Heart right ventricle (tissue), 16 donors: ENCODE measurements at regions of chr7 and their contacts with region 1.

Region 1: DNA sequence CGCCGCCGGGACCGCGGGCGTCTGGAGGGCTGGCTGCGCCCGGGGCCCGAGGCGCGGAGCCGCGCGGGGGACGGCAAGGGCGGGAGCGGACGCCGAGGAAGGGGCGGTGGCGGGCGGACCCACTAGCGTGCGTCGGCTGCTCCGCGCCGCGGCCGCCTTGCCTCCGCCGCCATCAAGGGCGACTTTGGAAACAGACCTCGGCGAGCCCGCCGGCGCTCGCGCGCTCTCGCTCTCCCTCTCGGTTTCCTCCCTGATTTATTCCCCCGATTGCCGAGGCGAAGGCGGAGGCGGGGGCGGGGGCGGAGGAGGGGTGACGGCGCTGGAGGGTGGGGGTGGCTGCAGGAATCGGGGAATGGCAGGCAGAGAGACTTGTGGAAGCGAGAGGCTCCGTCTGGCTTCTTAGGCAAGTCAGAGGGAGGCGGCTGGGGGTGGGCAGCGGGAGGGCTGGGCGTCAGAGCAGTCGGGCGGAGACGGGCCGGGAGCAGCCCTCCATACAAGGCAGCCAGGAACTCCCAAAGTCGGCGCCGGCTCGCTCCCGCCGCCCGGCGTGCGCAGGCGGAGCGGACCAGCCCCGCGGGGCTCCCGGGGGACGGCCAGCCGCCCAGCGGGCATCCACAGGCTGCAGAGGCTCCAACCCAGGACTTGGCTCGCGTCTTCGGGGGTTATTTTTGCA is at the start of gene CACNA2D1:
- DNase-seq: peak; percentile 88 to 89
- ATAC-seq: peak; percentile 94 to 99 (median 96)
- H3K4me3 ChIP-seq: peak within 1 kb of the TSS; percentile 36 to 77 (median 70)
- H3K27ac ChIP-seq: peak within 1 kb of the TSS; percentile 86 to 97 (median 92)
- H3K4me1 ChIP-seq: peaks cover 0 to 38% (median 20%) of the 10 kb centered on the region in 9 donors
- H3K27me3 ChIP-seq: peaks cover 0 to 51% (median 3%) of the 10 kb centered on the region in 7 donors
- CTCF ChIP-seq: peak in 5 of 9 donors; percentile 25 to 64 (median 61)
- total RNA-seq, gene CACNA2D1: 34.0 to 131 (median 81.6) TPM

Region 2: GRCh38 chr7:82172017-82172416 is 271.7 kb before region 1 on chr7:
- intact Hi-C with region 1: loop called in 1 of 10 experiments (anchors 10 kb)
- DNase-seq: no peak
- ATAC-seq: no peak
- H3K4me3 ChIP-seq: no peak overlapping the region
- H3K27ac ChIP-seq: no peak overlapping the region
- H3K4me1 ChIP-seq: peaks cover 0 to 14% (median 0%) of the 10 kb centered on the region in 9 donors
- H3K27me3 ChIP-seq: no peaks in the 10 kb centered on the region
- CTCF ChIP-seq: no peak

Region 3: GRCh38 chr7:82234457-82235049 is 209.1 kb before region 1 on chr7:
- intact Hi-C with region 1: loop called in 5 of 10 experiments (anchors 5 to 10 kb)
- DNase-seq: no peak
- ATAC-seq: peak in 2 of 8 donors; percentile 24 to 38
- H3K4me3 ChIP-seq: no peak overlapping the region
- H3K27ac ChIP-seq: peak overlapping the region in 1 of 10 donors; percentile 28
- H3K4me1 ChIP-seq: peaks cover 0 to 30% (median 11%) of the 10 kb centered on the region in 9 donors
- H3K27me3 ChIP-seq: no peaks in the 10 kb centered on the region
- CTCF ChIP-seq: peak; percentile 46 to 74 (median 55)

Region 4: GRCh38 chr7:82247814-82248433 is 195.8 kb before region 1 on chr7:
- intact Hi-C with region 1: loop called in 1 of 10 experiments (anchors 5 kb)
- DNase-seq: no peak
- ATAC-seq: peak in 5 of 8 donors; percentile 55 to 67 (median 58)
- H3K4me3 ChIP-seq: no peak overlapping the region
- H3K27ac ChIP-seq: no peak overlapping the region
- H3K4me1 ChIP-seq: peaks cover 0 to 35% (median 8%) of the 10 kb centered on the region in 9 donors
- H3K27me3 ChIP-seq: no peaks in the 10 kb centered on the region
- CTCF ChIP-seq: peak in 7 of 9 donors; percentile 27 to 60 (median 48)

Region 5: DNA sequence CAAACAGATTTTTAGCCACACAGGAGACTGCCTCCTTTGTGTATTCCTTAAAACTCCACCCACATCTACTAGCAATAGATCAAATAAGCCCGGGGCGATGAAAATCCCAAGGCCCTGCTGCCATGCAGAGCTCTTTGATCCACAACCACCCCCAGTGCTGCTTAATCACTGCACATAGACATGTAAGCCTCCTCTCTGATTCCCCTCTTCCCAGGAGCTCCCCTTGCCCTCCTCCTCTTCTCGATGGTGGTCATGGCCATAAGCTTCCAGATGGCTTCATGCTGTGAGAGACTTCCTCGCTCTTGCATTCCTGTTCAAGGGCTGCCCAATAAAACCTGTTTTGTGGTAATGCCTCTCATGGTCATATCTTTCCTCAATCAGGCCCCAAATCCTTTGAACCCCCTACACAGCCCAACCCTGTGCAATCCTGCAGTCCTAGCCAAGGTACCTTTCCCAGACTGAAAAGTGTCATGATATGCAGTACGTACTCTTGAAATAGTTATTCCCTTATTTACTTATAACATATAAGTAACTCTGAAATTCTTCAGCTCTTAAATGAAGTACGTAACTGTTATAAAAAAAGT is 158.7 kb before region 1 on chr7:
- intact Hi-C with region 1: loop called in 1 of 10 experiments (anchors 2 kb)
- DNase-seq: no peak
- ATAC-seq: peak in 1 of 8 donors; percentile 53
- H3K4me3 ChIP-seq: no peak overlapping the region
- H3K27ac ChIP-seq: peak overlapping the region in 8 of 10 donors; percentile 47 to 91 (median 71)
- H3K4me1 ChIP-seq: peaks cover 0 to 45% (median 23%) of the 10 kb centered on the region in 9 donors
- H3K27me3 ChIP-seq: no peaks in the 10 kb centered on the region
- CTCF ChIP-seq: no peak

Region 6: GRCh38 chr7:82348251-82348650 is 95.4 kb before region 1 on chr7:
- intact Hi-C with region 1: loop called in 1 of 10 experiments (anchors 10 kb)
- DNase-seq: no peak
- ATAC-seq: peak in 4 of 8 donors; percentile 9 to 54 (median 45)
- H3K4me3 ChIP-seq: no peak overlapping the region
- H3K27ac ChIP-seq: peak overlapping the region in 2 of 10 donors; percentile 8 to 32
- H3K4me1 ChIP-seq: peaks cover 0 to 12% (median 0%) of the 10 kb centered on the region in 9 donors
- H3K27me3 ChIP-seq: no peaks in the 10 kb centered on the region
- CTCF ChIP-seq: no peak